ENCODE measurements at regions of chr20 and their contacts with region 1.

Region 1: DNA sequence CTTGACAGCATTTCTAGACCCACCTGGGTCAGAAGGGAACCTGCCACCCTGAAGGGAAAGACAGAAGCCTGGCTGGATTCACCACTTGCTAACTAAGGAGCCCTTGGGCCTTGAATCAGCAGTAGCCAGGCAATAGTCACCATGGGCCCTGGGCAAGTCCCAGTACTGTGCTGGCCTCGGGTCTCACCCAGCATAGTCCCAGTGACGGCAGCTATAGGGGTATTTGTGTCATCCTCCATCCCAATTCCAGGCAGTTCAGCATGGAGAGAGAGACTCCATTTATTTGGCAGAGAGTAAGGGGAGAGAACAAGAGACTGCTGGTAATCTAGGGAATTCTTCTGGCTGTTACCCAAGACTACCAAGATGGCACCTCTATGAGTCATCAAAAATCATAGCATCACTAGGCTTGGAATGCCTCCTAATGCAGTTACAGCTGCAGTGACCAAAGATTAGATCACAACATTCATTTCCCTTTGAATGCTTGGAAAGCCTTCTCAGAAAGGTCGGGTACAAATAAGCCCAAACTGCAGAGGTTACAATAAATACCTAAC is 660.3 kb upstream of the FLRT3 start:
- DNase-seq: no peak
- ATAC-seq: no peak
- H3K4me3 ChIP-seq: no peak overlapping the region
- H3K27ac ChIP-seq: no peak overlapping the region
- H3K4me1 ChIP-seq: no peaks in the 10 kb centered on the region
- H3K27me3 ChIP-seq: no peaks in the 10 kb centered on the region
- CTCF ChIP-seq: no peak
- POLR2A ChIP-seq: no peak
- RAD21 ChIP-seq: no peak

Region 2: DNA sequence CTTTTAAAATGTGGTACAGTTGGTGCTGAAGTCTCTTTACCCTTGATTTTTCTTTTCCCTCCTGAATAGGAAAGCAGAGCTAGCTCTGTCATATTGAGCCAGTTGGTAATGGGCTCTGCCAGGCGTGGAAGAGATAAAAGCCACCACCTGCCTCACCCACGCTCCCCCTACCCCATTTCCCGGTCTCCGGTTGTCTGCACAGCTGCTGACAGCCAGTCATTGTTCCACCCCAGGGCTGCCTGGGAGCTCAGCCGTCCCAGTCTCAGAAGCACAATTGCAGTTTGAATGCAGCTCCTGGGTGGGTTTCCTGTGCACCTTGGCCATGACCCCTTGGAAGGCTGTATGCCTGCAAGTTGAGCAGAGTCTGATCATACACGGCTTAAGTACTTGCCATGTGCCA is 14.8 kb after region 1 on chr20:
- CTCF ChIA-PET with region 1: no interaction called
- POLR2A ChIA-PET with region 1: no interaction called
- dilution Hi-C with region 1: no loop called
- in situ Hi-C with region 1: no loop called
- intact Hi-C with region 1: loop called (anchors 2 kb)
- DNase-seq: no peak
- ATAC-seq: no peak
- H3K4me3 ChIP-seq: no peak overlapping the region
- H3K27ac ChIP-seq: no peak overlapping the region
- H3K4me1 ChIP-seq: no peaks in the 10 kb centered on the region
- H3K27me3 ChIP-seq: no peaks in the 10 kb centered on the region
- CTCF ChIP-seq: no peak
- POLR2A ChIP-seq: no peak
- RAD21 ChIP-seq: no peak

Measured in IMR-90 (cell line).